Activated naive CD4-positive, alpha-beta T cell treated with anti-CD3 and anti-CD28 coated beads for 36 hours (primary cell): ENCODE measurements at regions of chr10 and their contacts with region 1.

Region 1: GRCh38 chr10:97498076-97498840 is at the start of gene MMS19:
- DNase-seq: peak; percentile 99
- H3K4me3 Mint-ChIP-seq: peak within 1 kb of the TSS; percentile 87
- H3K27ac Mint-ChIP-seq: peak within 1 kb of the TSS; percentile 94
- H3K4me1 Mint-ChIP-seq: peaks cover 41% of the 10 kb centered on the region
- H3K27me3 Mint-ChIP-seq: peaks cover 21% of the 10 kb centered on the region
- total RNA-seq, gene MMS19: 95.0 to 95.6 TPM

Region 2: GRCh38 chr10:97292097-97292862 is 206.0 kb before region 1 on chr10 and contains the start of gene ARHGAP19:
- CTCF ChIA-PET with region 1: no interaction called
- intact Hi-C with region 1: loop called (anchors 1 kb)
- DNase-seq: peak; percentile 98
- H3K4me3 Mint-ChIP-seq: peak within 1 kb of the TSS; percentile 91
- H3K27ac Mint-ChIP-seq: peak within 1 kb of the TSS; percentile 88
- H3K4me1 Mint-ChIP-seq: peaks cover 23% of the 10 kb centered on the region
- H3K27me3 Mint-ChIP-seq: no peaks in the 10 kb centered on the region
- total RNA-seq, gene ARHGAP19: 76.7 to 91.9 TPM

Region 3: GRCh38 chr10:97400665-97401454 is 97.4 kb before region 1 on chr10 and contains the start of gene RRP12:
- CTCF ChIA-PET with region 1: no interaction called
- intact Hi-C with region 1: loop called (anchors 1 kb)
- DNase-seq: peak; percentile 92
- H3K4me3 Mint-ChIP-seq: peak within 1 kb of the TSS; percentile 92
- H3K27ac Mint-ChIP-seq: peak within 1 kb of the TSS; percentile 83
- H3K4me1 Mint-ChIP-seq: peaks cover 15% of the 10 kb centered on the region
- H3K27me3 Mint-ChIP-seq: no peaks in the 10 kb centered on the region
- total RNA-seq, gene RRP12: 51.0 to 55.2 TPM

Region 4: GRCh38 chr10:97463363-97464132 is 34.7 kb before region 1 on chr10:
- CTCF ChIA-PET with region 1: interaction called, 4 read pairs
- intact Hi-C with region 1: loop called (anchors 1 kb)
- DNase-seq: peak; percentile 49
- H3K4me3 Mint-ChIP-seq: no peak overlapping the region
- H3K27ac Mint-ChIP-seq: peak overlapping the region; percentile 50
- H3K4me1 Mint-ChIP-seq: no peaks in the 10 kb centered on the region
- H3K27me3 Mint-ChIP-seq: no peaks in the 10 kb centered on the region

Region 5: GRCh38 chr10:97640174-97640867 is 142.1 kb after region 1 on chr10 and contains the start of gene PI4K2A:
- CTCF ChIA-PET with region 1: no interaction called
- intact Hi-C with region 1: loop called (anchors 1 kb)
- DNase-seq: peak; percentile 100
- H3K4me3 Mint-ChIP-seq: peak within 1 kb of the TSS; percentile 93
- H3K27ac Mint-ChIP-seq: peak within 1 kb of the TSS; percentile 73
- H3K4me1 Mint-ChIP-seq: peaks cover 18% of the 10 kb centered on the region
- H3K27me3 Mint-ChIP-seq: no peaks in the 10 kb centered on the region
- total RNA-seq, gene PI4K2A: 8.9 to 9.4 TPM

Region 6: GRCh38 chr10:97843281-97843671 is 345.0 kb after region 1 on chr10:
- CTCF ChIA-PET with region 1: no interaction called
- intact Hi-C with region 1: loop called (anchors 1 kb)
- DNase-seq: no peak
- H3K4me3 Mint-ChIP-seq: no peak overlapping the region
- H3K27ac Mint-ChIP-seq: no peak overlapping the region
- H3K4me1 Mint-ChIP-seq: peaks cover 10% of the 10 kb centered on the region
- H3K27me3 Mint-ChIP-seq: no peaks in the 10 kb centered on the region